ENCODE measurements at regions of chr16 and their contacts with region 1.

Region 1: GRCh38 chr16:21158208-21159110 is at the start of gene LDAF1:
- DNase-seq: peak; percentile 63
- ATAC-seq: peak; percentile 96
- H3K4me3 ChIP-seq: peak within 1 kb of the TSS; percentile 81
- H3K27ac ChIP-seq: peak within 1 kb of the TSS; percentile 75
- H3K4me1 ChIP-seq: peaks cover 9% of the 10 kb centered on the region
- H3K27me3 ChIP-seq: no peaks in the 10 kb centered on the region
- CTCF ChIP-seq: 0 out of 2 replicates have a peak, but pooled peaks have one; percentile 5
- POLR2A ChIP-seq: no peak
- RAD21 ChIP-seq: peak; percentile 12; the same call in 1 of the 2 replicates
- total RNA-seq, gene LDAF1: 51.4 and 62.2 TPM in 2 replicates

Region 2: GRCh38 chr16:20806168-20807050 is 352.1 kb before region 1 on chr16 and contains the starts of genes ERI2 and REXO5:
- CTCF ChIA-PET with region 1: no interaction called
- POLR2A ChIA-PET with region 1: no interaction called
- dilution Hi-C with region 1: no loop called
- in situ Hi-C with region 1: no loop called
- intact Hi-C with region 1: loop called (anchors 2 kb)
- DNase-seq: peak; percentile 94
- ATAC-seq: peak; percentile 90
- H3K4me3 ChIP-seq: peak within 1 kb of the TSS; percentile 62
- H3K27ac ChIP-seq: peak within 1 kb of the TSS; percentile 73
- H3K4me1 ChIP-seq: no peaks in the 10 kb centered on the region
- H3K27me3 ChIP-seq: no peaks in the 10 kb centered on the region
- CTCF ChIP-seq: peak; percentile 53
- POLR2A ChIP-seq: peak; percentile 79
- RAD21 ChIP-seq: peak; percentile 3; the same call in 1 of the 2 replicates
- total RNA-seq, gene ERI2: 10.2 and 15.0 TPM in 2 replicates
- total RNA-seq, gene REXO5: 6.1 and 7.0 TPM in 2 replicates

Region 3: GRCh38 chr16:20900299-20901067 is 258.0 kb before region 1 on chr16 and contains the starts of genes DCUN1D3 and LYRM1:
- CTCF ChIA-PET with region 1: no interaction called
- POLR2A ChIA-PET with region 1: no interaction called
- dilution Hi-C with region 1: no loop called
- in situ Hi-C with region 1: no loop called
- intact Hi-C with region 1: loop called (anchors 5 kb)
- DNase-seq: peak; percentile 100
- ATAC-seq: peak; percentile 87
- H3K4me3 ChIP-seq: peak within 1 kb of the TSS; percentile 100
- H3K27ac ChIP-seq: peak within 1 kb of the TSS; percentile 100
- H3K4me1 ChIP-seq: peaks cover 10% of the 10 kb centered on the region
- H3K27me3 ChIP-seq: no peaks in the 10 kb centered on the region
- CTCF ChIP-seq: no peak
- POLR2A ChIP-seq: peak; percentile 96
- RAD21 ChIP-seq: no peak
- total RNA-seq, gene DCUN1D3: 42.3 and 51.7 TPM in 2 replicates
- total RNA-seq, gene LYRM1: 35.0 and 43.6 TPM in 2 replicates

Region 4: GRCh38 chr16:21283521-21284289 is 125.2 kb after region 1 on chr16:
- CTCF ChIA-PET with region 1: no interaction called
- POLR2A ChIA-PET with region 1: no interaction called
- dilution Hi-C with region 1: no loop called
- in situ Hi-C with region 1: no loop called
- intact Hi-C with region 1: loop called (anchors 5 kb)
- DNase-seq: peak; percentile 25
- ATAC-seq: peak; percentile 98
- H3K4me3 ChIP-seq: peak overlapping the region; percentile 29
- H3K27ac ChIP-seq: no peak overlapping the region
- H3K4me1 ChIP-seq: no peaks in the 10 kb centered on the region
- H3K27me3 ChIP-seq: peaks cover 49% of the 10 kb centered on the region
- CTCF ChIP-seq: peak; percentile 39
- POLR2A ChIP-seq: no peak
- RAD21 ChIP-seq: peak; percentile 19; the same call in 1 of the 2 replicates

Region 5: DNA sequence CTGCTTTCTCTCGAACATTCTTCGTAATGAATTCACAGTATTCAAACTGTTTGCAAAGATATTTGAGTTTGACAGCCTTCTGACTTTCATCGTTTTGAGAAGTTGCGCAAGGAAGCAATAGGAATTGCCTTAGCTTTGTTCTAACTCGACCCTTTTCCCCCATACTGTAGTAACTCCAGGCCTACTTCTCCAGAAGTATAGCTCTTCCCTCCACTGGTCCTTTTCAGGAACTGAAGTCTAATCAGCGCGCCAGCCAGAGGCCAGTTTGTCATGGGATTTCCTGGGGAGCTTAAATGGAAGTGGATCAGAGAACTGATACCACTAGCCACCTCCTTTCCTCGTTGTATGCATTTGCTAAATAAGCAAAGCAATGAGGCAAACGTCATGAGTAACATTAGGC is 1188.0 kb after region 1 on chr16:
- CTCF ChIA-PET with region 1: no interaction called
- POLR2A ChIA-PET with region 1: no interaction called
- dilution Hi-C with region 1: no loop called
- in situ Hi-C with region 1: loop called (anchors 25 kb)
- intact Hi-C with region 1: no loop called
- DNase-seq: no peak
- ATAC-seq: no peak
- H3K4me3 ChIP-seq: no peak overlapping the region
- H3K27ac ChIP-seq: no peak overlapping the region
- H3K4me1 ChIP-seq: peaks cover 2% of the 10 kb centered on the region; the same call in 1 of the 2 replicates
- H3K27me3 ChIP-seq: no peaks in the 10 kb centered on the region
- CTCF ChIP-seq: no peak
- POLR2A ChIP-seq: no peak
- RAD21 ChIP-seq: no peak